Left cardiac atrium (tissue), 4 donors: ENCODE measurements at regions of chr18 and their contacts with region 1.

Region 1: DNA sequence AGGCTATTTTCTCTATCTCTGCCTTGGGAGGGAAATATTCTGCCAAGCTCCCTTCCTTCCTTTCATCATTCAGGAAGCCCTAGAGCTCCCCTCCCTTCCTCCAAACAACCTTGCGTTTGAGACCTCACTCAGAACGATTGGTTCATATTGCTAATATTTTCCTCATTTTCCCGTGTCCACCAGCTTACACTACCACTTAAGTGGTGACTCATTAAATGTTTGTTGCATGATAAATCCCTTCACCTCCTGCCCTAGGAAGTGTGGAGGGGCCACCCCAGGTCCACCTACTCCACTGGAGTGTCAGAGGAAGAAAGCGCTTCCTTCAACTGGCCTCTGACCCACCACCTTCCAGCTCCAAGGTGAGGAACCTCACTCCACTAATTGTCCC is 2.3 kb upstream of the LPIN2 start:
- DNase-seq: no peak
- ATAC-seq: peak in 1 of 2 donors; percentile 35

Region 2: DNA sequence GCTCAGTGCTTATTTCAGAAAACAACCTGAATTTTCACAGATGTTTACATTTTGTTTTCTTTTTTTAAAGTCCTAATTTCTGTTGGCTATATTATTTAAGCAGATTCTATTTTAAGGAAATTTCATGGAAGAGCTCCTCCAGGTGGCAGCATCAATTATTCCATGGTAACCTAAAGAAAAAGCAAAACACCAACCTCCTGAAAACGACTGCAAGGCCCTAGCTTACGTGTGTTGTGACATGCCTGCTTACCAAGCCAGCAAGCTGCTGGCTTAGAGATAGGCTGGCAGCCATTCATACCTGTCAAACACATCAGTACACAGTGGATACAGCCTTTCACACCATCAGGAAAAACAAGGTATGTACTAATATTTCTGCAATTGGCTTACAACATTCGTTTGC is 67.2 kb before region 1 on chr18:
- intact Hi-C with region 1: no loop called
- DNase-seq: no peak
- ATAC-seq: peak; percentile 81 to 97

Region 3: DNA sequence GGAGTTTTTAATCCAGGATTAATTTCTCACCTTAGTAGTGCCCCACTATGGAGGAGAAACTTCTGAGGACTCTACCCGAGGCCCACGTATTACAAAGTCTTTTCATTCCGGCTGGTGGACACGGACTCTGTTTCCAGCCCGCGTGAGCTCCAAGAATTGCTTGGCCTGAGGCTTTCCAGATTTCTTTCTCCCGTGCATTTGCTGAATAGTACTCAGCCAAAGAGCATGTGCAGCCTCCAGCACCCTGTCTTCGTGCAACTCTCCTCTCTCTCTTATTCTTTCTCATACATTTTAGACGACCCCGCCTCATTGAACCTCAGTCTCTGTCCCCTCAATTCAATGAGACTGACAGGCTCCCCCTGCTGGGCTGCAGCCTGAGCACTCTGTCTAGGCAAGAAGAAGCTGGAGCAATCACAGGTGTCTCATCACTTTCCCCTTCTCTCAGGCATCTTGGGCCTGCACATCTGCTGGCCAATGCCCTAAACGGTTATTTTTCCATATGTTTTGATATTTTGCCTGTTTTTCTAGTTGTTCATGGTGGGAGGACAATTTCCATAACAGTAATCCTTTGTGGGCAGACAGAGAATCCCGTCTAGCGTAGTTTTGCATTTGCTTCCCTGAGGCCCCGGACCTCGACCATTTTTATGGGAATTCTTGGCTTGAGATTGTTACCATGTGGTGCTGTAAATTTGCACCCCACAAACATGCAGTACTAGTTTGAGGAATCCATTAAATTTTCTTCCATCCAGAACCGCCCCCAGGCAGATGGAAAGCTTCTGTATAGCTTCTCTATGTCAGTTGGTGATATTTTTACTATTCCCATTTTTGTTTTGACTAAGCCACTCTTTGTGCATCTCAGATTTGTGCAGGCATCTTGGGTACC is 47.8 kb after region 1 on chr18:
- intact Hi-C with region 1: loop called in 1 of 2 experiments (anchors 5 kb)
- DNase-seq: peak; percentile 76
- ATAC-seq: peak; percentile 56 to 77